Endothelial cell of umbilical vein (primary cell): ENCODE measurements at regions of chr19 and their contacts with region 1.

Region 1: DNA sequence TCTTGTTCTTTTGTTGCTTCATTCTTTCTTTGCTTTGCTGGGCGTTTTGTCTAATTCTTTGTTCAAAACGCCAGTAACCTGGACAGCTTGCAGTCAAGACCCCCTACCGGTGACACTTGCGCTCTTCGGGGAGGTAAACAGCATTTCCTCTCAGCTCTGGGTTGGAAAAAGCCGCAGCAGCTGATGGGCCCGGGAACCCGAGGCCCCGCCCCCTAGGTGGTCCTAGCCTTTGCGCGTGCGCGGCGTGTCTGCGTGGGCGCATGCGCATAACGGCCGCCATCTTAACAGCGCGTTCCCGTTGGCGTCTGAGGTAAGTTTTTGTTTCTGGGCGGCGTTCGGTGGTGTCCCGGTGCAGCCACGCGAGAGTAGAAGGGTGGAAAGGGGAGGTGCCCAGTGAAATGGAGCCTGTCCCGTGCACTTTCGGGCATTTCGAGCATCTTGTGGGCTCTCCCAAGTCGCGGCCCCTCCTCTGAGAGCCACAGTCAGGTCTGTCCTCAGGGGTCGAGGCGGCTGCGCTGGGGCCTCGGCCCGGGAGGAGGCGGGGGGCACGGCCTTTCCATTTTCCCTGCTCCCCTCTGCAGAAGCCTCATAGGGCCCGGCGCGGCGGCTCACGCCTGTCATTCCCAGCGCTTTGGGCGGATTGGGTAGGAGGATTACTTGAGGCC is at the start of gene ZNF559:
- DNase-seq: peak; percentile 98
- H3K4me3 ChIP-seq: peak within 1 kb of the TSS; percentile 74 to 94 (median 90)
- H3K27ac ChIP-seq: peak within 1 kb of the TSS; percentile 59
- H3K4me1 ChIP-seq: peaks cover 10% of the 10 kb centered on the region
- H3K27me3 ChIP-seq: no peaks in the 10 kb centered on the region
- CTCF ChIP-seq: peak; percentile 23 to 33
- POLR2A ChIP-seq: peak; percentile 9
- total RNA-seq, gene ZNF559: 10.1 and 13.5 TPM in 2 replicates

Region 2: DNA sequence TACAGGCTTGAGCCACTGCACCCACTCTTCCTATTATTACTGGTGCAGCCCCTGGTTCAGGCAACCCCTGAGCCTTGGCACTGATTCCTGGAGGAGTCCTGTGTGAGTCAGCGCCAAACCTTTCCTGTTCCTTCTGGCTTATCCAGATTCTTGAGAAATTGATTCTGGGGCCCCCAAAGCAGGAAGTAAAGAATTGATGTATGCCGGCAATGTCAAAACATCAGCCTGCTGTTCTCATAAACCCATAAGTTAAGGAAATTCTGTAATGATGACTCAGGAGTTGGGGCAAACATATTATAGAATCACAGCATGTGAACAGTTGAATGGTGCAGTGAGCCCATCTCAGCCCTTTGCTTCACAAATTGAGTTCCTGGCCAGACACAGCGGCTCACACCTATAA is 195.9 kb before region 1 on chr19:
- CTCF ChIA-PET with region 1: no interaction called
- POLR2A ChIA-PET with region 1: no interaction called
- dilution Hi-C with region 1: no loop called
- intact Hi-C with region 1: loop called (anchors 5 kb)
- DNase-seq: peak; percentile 96
- H3K4me3 ChIP-seq: no peak overlapping the region
- H3K27ac ChIP-seq: peak overlapping the region; percentile 76
- H3K4me1 ChIP-seq: peaks cover 5% of the 10 kb centered on the region
- H3K27me3 ChIP-seq: no peaks in the 10 kb centered on the region
- CTCF ChIP-seq: no peak
- POLR2A ChIP-seq: peak; percentile 29

Region 3: DNA sequence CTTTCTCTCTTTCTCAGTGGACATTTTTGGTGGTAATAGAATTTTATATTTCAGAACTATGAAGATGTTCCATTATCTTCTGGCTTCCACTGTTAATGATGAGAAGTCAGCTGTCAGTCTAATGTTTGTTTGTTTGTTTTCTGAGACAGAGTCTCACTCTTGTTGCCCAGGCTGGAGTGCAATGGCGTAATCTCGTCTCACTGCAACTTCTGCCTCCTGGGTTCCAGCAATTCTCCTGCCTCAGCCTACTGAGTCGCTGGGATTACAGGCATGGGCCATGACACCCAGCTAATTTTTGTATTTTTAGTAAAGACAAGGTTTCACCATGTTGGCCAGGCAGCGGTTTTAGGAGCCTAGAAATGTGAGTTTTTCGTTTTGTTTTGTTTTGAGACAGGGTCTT is 179.1 kb before region 1 on chr19:
- CTCF ChIA-PET with region 1: no interaction called
- POLR2A ChIA-PET with region 1: no interaction called
- dilution Hi-C with region 1: no loop called
- intact Hi-C with region 1: no loop called
- DNase-seq: no peak
- H3K4me3 ChIP-seq: no peak overlapping the region
- H3K27ac ChIP-seq: no peak overlapping the region
- H3K4me1 ChIP-seq: peaks cover 8% of the 10 kb centered on the region
- H3K27me3 ChIP-seq: no peaks in the 10 kb centered on the region
- CTCF ChIP-seq: no peak
- POLR2A ChIP-seq: no peak

Region 4: DNA sequence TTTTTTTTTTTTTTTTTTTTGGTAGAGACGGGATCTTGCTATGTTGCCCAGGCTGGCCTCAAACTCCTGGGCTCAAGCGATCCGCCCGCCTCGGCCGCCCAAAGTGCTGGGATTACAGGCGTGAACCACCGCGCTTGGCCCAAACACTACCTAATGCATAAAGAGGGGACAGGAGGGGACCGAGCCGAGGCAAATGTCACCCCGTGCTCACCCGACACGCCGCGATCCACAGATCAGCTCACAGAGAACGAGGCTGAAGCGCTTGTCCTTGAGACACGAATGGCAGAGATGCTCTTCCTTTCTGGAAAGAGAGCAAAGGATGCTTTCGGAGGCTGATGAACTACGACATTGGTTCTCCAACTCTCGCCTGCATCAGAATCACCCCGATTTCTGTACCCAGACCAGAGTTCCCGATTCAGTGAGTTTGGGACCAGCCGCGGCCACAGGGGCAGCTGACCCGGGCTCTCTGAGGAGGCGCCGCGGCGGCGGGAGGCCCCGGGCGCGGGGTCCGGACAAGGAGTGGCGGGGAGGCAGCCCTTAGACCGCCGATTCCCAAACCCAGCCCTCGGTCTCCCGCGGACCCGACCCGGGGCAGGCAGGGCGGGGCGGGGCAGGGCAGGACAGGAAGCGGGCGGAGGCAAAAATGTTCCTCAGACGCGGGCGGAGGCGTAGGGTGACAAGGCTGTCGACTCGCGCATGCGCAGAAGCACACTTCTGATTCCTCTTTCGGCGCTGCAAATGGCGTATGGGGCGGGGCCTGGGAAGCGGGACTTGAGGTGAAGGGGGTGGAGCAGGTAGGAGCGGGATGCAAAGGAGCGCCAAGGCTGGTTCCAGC is 14.7 kb before region 1 on chr19 and contains the start of gene ZNF699:
- CTCF ChIA-PET with region 1: interaction called, 14 read pairs
- POLR2A ChIA-PET with region 1: interaction called, 5 read pairs
- dilution Hi-C with region 1: no loop called
- intact Hi-C with region 1: loop called (anchors 1 kb)
- DNase-seq: peak; percentile 98
- H3K4me3 ChIP-seq: peak within 1 kb of the TSS; percentile 52 to 88 (median 67)
- H3K27ac ChIP-seq: peak within 1 kb of the TSS; percentile 55
- H3K4me1 ChIP-seq: peaks cover 7% of the 10 kb centered on the region
- H3K27me3 ChIP-seq: no peaks in the 10 kb centered on the region
- CTCF ChIP-seq: no peak
- POLR2A ChIP-seq: no peak
- total RNA-seq, gene ZNF699: 3.9 and 4.7 TPM in 2 replicates

Region 5: DNA sequence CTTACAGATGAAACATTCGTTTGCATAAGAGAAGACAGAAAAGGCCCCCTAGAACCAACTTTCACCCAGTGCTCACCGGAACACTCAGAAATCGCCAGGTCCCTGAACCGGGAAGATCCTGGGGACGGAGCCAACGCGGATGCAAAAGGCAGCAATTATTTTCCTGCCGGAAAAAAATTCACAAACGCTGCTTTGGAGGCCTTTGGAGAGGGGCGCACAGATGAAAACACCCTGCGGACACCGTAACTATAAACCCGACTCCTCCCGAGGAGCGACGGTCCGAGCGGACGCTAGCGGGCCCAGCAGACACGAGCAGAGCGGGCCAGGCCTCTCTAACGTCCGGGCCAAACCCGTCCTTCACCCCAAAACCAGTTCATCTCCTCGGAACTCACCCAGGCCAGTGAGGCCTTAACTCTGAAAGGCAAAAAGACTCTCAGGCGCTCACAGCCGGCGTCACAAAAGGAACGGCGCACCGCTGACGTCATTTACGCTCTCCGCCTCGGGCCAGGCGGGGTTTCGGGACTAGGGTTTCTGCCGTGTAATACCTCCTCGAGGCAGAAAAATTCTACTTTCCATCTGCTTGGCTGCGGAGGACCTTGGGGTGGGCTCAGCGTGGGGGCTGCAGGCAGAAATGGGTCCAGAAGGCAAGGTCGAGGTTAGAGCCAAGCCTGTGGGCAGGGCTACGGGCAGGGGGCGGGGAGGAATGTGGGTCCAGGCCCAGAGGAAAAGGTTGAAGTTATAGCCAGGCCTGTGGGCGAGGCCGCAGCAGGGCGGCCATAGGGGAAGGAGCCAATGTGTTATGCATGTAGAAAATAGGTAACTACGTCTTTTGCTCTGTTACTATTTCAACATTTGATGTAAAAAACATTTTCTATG is 214.4 kb after region 1 on chr19 and contains the start of gene ZNF426:
- CTCF ChIA-PET with region 1: no interaction called
- POLR2A ChIA-PET with region 1: no interaction called
- dilution Hi-C with region 1: no loop called
- intact Hi-C with region 1: loop called (anchors 1 kb)
- DNase-seq: peak; percentile 89
- H3K4me3 ChIP-seq: peak within 1 kb of the TSS; percentile 57 to 99 (median 59)
- H3K27ac ChIP-seq: peak within 1 kb of the TSS; percentile 82
- H3K4me1 ChIP-seq: peaks cover 5% of the 10 kb centered on the region
- H3K27me3 ChIP-seq: no peaks in the 10 kb centered on the region
- CTCF ChIP-seq: no peak
- POLR2A ChIP-seq: peak; percentile 54
- total RNA-seq, gene ZNF426: 14.6 and 16.1 TPM in 2 replicates